ENCODE measurements at regions of chr17 and their contacts with region 1.

Region 1: DNA sequence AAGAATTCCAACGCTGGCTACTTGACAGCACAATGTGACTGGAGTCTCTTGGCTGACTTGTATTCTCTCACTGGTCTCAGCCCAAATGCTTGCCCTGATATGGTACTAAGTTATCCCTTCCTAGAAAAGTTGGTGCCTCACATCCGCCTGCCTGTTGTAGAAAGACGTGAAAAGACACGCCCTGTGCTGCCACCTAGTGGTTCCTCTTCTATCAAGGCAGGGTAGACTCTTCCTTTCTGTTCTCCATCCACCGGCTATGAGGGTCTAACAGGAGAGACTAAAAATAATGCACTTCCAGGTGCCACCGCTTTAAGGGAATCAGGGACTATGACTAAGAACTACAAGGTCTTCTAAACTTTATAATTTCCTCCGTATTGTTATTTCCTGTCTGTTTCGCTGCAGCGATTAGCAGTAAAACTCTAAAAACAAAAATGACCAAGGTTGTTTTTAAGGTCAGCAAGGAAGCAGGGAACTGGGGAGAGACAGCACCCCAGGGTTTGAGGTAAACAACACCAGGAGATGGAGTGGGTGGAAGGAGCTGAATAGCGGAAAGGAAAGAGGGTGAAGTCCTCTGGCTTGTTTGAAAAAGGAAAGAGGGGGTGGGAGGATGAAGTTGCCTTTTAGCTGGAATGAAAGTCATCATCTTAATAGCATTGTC is 109.5 kb downstream of the YPEL2 start:
- DNase-seq: peak; percentile 98
- H3K4me3 ChIP-seq: peak overlapping the region in 1 of 3 experiments; percentile 4
- H3K27ac ChIP-seq: peak overlapping the region; percentile 93
- H3K4me1 ChIP-seq: peaks cover 51% of the 10 kb centered on the region
- H3K27me3 ChIP-seq: no peaks in the 10 kb centered on the region
- CTCF ChIP-seq: peak; percentile 78 to 85
- POLR2A ChIP-seq: no peak

Region 2: GRCh38 chr17:59220376-59221158 is 220.3 kb before region 1 on chr17 and contains the start of gene GDPD1:
- CTCF ChIA-PET with region 1: interaction called, 4 read pairs
- POLR2A ChIA-PET with region 1: no interaction called
- dilution Hi-C with region 1: no loop called
- intact Hi-C with region 1: loop called (anchors 1 kb)
- DNase-seq: peak; percentile 97
- H3K4me3 ChIP-seq: peak within 1 kb of the TSS; percentile 39 to 67 (median 51)
- H3K27ac ChIP-seq: peak within 1 kb of the TSS; percentile 4
- H3K4me1 ChIP-seq: peaks cover 3% of the 10 kb centered on the region
- H3K27me3 ChIP-seq: no peaks in the 10 kb centered on the region
- CTCF ChIP-seq: peak; percentile 57 to 69
- POLR2A ChIP-seq: peak; percentile 33
- total RNA-seq, gene GDPD1: 4.3 and 4.9 TPM in 2 replicates

Region 3: DNA sequence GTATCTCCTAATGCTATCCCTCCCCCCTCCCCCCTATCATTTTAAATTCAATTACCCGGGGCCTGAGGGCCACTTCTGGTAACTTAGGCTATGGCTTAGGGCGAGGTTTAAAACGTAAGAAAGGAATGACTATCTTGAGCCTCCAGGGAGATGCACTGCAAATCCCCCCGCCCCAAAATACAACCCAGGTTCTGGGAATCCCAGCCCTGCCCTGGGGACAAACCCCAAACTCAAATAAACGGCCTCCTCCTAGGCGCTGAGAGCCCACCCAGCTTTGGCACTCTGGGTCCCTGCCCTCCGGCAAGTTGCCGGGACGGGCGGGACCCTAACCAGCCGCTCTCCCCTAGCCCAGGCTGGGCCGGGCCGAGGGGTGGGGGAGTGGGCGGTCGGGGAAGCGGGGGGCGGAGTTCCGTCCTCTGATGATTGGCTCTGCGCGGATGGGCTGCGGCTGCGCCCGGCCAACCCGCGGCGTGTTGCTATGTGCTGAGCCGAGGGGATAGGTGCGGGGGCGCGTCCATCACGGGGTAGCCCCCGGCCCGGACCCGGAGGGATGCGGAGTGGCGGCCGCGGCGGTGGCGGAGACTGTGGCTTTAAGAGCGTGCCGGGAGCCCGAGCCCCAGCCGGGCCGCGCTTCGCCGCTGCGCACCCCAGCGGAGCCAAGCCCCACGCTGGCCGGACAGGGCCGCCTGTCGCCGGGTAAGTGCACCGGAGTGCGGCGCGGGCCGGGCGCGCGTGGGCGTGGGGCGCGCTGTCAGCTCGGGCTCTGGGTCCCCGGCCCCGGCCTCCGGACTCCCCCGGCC is 109.6 kb before region 1 on chr17 and contains the start of gene YPEL2:
- CTCF ChIA-PET with region 1: interaction called, 147 read pairs
- POLR2A ChIA-PET with region 1: interaction called, 9 read pairs
- dilution Hi-C with region 1: loop called (anchors 25 kb)
- intact Hi-C with region 1: loop called (anchors 1 kb)
- DNase-seq: peak; percentile 96
- H3K4me3 ChIP-seq: peak within 1 kb of the TSS; percentile 27 to 98 (median 75)
- H3K27ac ChIP-seq: peak within 1 kb of the TSS; percentile 69
- H3K4me1 ChIP-seq: peaks cover 53% of the 10 kb centered on the region
- H3K27me3 ChIP-seq: no peaks in the 10 kb centered on the region
- CTCF ChIP-seq: no peak
- POLR2A ChIP-seq: peak; percentile 57
- total RNA-seq, gene YPEL2: 59.5 and 66.8 TPM in 2 replicates

Region 4: GRCh38 chr17:59378458-59379074 is 62.3 kb before region 1 on chr17:
- CTCF ChIA-PET with region 1: interaction called, 5 read pairs
- POLR2A ChIA-PET with region 1: no interaction called
- dilution Hi-C with region 1: no loop called
- intact Hi-C with region 1: loop called (anchors 1 kb)
- DNase-seq: peak; percentile 93
- H3K4me3 ChIP-seq: no peak overlapping the region
- H3K27ac ChIP-seq: peak overlapping the region; percentile 84
- H3K4me1 ChIP-seq: peaks cover 59% of the 10 kb centered on the region
- H3K27me3 ChIP-seq: no peaks in the 10 kb centered on the region
- CTCF ChIP-seq: no peak
- POLR2A ChIP-seq: no peak

Region 5: GRCh38 chr17:59427425-59427921 is 13.4 kb before region 1 on chr17:
- CTCF ChIA-PET with region 1: interaction called, 96 read pairs
- POLR2A ChIA-PET with region 1: interaction called, 7 read pairs
- dilution Hi-C with region 1: no loop called
- intact Hi-C with region 1: loop called (anchors 1 kb)
- DNase-seq: peak; percentile 98
- H3K4me3 ChIP-seq: peak overlapping the region in 1 of 3 experiments; percentile 2
- H3K27ac ChIP-seq: peak overlapping the region; percentile 91
- H3K4me1 ChIP-seq: peaks cover 68% of the 10 kb centered on the region
- H3K27me3 ChIP-seq: no peaks in the 10 kb centered on the region
- CTCF ChIP-seq: no peak
- POLR2A ChIP-seq: peak; percentile 59

Region 6: DNA sequence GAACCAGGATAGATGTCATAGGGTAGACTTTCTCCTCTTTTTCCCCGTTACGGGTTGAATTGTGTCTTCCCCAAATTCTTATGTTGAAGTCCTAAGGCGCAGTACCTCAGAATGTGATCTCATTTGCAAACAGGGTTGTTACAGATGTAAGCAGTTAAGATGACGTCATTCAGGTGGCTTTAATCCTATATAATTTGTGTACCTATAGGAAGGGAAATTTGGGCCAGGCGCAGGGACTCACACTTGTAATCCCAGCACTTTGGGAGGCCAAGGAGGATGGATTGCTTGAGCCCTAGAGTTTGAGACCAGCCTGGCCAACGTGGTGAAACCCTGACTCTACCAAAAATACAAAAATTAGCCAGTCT is 25.0 kb after region 1 on chr17:
- CTCF ChIA-PET with region 1: no interaction called
- POLR2A ChIA-PET with region 1: no interaction called
- dilution Hi-C with region 1: no loop called
- intact Hi-C with region 1: no loop called
- DNase-seq: no peak
- H3K4me3 ChIP-seq: no peak overlapping the region
- H3K27ac ChIP-seq: no peak overlapping the region
- H3K4me1 ChIP-seq: no peaks in the 10 kb centered on the region
- H3K27me3 ChIP-seq: no peaks in the 10 kb centered on the region
- CTCF ChIP-seq: no peak
- POLR2A ChIP-seq: no peak

Region 7: DNA sequence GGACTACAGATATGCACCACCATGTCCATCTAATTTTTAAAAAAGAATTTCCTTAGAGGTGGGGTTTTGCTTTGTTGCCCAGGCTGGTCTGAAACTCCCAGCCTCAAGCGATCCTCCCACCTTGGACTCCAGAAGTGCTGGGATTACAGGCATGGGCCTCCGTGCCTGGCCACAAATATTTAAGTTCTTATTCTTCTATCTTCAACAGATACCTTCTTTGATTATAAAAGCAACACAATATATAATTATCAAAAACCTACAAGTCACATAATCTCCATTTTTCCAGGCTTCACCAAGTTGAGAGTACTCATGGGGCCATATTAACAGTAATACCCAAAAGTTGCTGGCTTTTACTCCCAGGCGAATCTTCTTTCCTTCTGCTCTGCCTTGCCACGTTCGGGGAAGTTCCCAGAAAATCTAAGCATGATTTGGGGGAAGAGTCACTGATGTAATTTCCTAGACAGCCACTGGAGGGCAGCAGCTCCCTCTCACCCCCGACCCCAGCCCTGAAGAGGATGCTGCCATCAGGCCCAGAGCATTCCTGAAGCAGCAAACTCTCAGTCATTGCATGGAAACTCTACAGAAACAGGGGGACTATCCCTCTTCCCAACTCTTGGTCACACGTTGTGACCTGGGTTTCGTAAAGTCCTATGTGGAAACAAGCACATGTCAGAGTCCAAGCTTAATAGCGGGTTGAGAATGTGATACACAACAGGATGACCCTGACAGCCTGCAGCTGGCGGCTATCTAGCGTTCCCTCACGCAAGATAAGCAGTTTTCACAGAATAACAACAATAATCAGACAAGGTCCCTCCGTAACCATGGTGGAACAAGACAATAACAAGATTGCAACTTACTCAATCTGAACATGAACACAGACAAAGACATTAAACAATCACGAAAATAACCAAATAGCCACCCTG is 80.6 kb after region 1 on chr17:
- CTCF ChIA-PET with region 1: interaction called, 12 read pairs
- POLR2A ChIA-PET with region 1: no interaction called
- dilution Hi-C with region 1: no loop called
- intact Hi-C with region 1: loop called (anchors 5 kb)
- DNase-seq: peak; percentile 72
- H3K4me3 ChIP-seq: no peak overlapping the region
- H3K27ac ChIP-seq: no peak overlapping the region
- H3K4me1 ChIP-seq: no peaks in the 10 kb centered on the region
- H3K27me3 ChIP-seq: peaks cover 2 to 7% of the 10 kb centered on the region in 2 experiments
- CTCF ChIP-seq: peak; percentile 75 to 79
- POLR2A ChIP-seq: no peak

Region 8: DNA sequence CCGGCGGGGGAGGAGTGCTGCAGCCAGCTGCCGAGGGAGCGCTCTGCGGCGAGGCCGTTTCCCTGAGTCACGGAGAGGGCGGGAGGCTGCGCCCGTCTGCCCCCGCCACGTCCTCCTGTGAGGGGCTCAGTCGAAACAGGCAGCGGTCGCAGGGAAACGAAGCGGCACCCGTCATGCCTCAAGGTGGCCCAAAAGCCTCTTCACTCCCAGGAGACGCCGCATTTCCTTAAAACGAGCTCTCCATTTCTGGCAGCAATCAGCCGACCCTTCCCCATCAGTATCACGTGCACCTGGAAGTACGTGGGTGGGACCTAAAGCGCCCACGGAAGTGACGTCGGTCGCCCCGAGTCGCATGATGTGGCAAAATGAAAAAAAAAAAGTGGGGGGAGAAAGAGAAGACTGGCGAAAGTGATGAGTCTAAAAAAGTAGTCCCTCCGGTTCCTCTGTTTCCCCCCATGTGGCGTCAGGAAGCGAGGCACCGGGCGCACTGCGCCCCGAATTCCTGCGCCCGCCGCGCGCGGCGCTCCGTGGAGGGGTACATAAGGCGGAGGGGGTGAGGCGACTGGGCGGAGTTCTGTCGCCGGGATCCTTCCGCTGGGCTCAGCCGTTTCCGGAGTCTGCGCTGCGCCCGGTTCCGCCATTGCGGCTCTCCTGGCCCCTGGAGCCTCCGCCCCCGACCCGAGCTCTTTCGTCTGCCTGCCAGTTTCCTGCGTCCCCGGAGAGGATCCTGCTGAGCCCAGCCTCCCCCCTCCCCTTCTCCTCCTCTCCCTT is 178.6 kb after region 1 on chr17 and contains the start of gene CLTC:
- CTCF ChIA-PET with region 1: no interaction called
- POLR2A ChIA-PET with region 1: interaction called, 3 read pairs
- dilution Hi-C with region 1: no loop called
- intact Hi-C with region 1: loop called (anchors 1 kb)
- DNase-seq: peak; percentile 97
- H3K4me3 ChIP-seq: peak within 1 kb of the TSS; percentile 88 to 94 (median 93)
- H3K27ac ChIP-seq: peak within 1 kb of the TSS; percentile 91
- H3K4me1 ChIP-seq: peaks cover 42% of the 10 kb centered on the region
- H3K27me3 ChIP-seq: no peaks in the 10 kb centered on the region
- CTCF ChIP-seq: no peak
- POLR2A ChIP-seq: peak; percentile 81
- total RNA-seq, gene CLTC: 317 and 326 TPM in 2 replicates

Region 9: DNA sequence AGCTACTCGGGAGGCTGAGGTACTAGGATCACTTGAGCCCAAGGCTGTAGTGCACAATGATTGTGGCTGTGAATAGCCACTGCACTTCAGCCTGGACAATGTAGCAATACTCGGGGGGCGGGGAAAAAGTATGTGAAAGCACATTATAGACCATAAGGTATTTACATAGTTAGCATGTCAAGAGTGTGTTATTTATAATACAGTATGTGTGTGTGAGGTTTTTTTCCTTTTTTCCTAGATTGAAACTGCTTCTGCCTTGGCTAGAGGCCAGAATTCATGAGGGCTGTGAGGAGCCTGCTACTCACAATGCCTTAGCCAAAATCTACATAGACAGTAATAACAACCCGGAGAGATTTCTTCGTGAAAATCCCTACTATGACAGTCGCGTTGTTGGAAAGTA is 235.8 kb after region 1 on chr17:
- CTCF ChIA-PET with region 1: no interaction called
- POLR2A ChIA-PET with region 1: no interaction called
- dilution Hi-C with region 1: no loop called
- intact Hi-C with region 1: no loop called
- DNase-seq: no peak
- H3K4me3 ChIP-seq: no peak overlapping the region
- H3K27ac ChIP-seq: no peak overlapping the region
- H3K4me1 ChIP-seq: peaks cover 1% of the 10 kb centered on the region
- H3K27me3 ChIP-seq: no peaks in the 10 kb centered on the region
- CTCF ChIP-seq: no peak
- POLR2A ChIP-seq: no peak

Measured in endothelial cell of umbilical vein (primary cell).